ENCODE measurements at regions of chr2 and their contacts with region 1.

Region 1: DNA sequence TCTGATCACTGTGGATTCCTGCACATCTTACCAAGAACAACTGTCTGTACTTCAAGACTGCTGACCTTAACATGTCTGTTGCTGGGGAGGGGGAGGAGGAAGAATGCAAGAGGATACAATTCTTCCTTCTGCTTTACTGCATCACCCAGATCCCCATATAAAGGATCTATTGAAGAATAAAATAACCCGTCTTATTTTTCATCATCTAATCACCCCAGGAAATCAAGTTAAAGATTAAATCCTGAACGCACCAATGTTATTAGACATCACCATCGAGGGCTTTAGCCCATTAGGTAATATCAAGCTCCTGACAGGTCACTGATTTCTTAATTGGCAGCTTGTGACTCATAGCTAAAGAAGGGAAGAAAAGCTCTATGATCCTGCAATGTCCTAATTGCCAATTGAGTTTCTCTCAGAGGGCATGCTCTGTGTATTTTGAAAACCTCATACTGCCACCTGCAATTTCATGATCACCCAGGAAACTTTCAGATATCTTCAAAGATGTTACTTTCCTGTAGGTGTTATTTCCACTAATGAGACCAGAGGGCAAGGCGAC is 75.4 kb upstream of the KCNE4 start:
- DNase-seq: peak; percentile 32
- H3K4me3 Mint-ChIP-seq: no peak overlapping the region
- H3K27ac Mint-ChIP-seq: peak overlapping the region; percentile 73
- H3K4me1 Mint-ChIP-seq: peaks cover 49% of the 10 kb centered on the region
- H3K27me3 Mint-ChIP-seq: no peaks in the 10 kb centered on the region
- CTCF ChIP-seq: no peak

Region 2: DNA sequence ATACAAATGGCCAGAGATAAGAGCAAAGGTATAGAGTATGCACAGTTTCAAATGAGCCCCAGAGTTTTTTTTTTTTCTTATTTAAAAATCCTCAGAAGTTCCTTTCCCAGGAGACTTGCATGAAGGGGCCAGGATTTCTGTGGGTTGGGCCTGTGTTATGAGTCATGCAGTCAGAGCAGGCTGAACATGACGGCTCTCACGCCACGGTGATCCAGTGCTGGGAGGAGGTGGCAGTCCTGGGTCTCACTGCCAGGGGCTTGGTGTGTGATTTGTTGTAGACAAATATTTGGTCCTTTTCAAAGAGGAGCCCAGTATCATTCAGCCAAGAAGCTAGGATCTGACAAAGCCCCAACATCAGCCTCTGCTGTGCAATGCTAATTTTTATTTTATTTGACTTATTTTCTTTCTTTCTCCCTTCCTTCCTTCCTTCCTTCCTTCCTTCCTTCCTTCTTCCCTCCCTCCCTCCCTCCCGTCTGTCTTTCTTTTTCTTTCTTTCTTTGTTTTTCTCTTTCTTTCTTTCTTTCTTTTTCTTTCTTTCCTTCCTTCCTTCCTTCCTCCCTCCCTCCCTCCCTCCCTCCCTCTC is 65.0 kb after region 1 on chr2:
- CTCF ChIA-PET with region 1: no interaction called
- intact Hi-C with region 1: loop called (anchors 5 kb)
- DNase-seq: peak; percentile 82
- H3K4me3 Mint-ChIP-seq: peak overlapping the region; percentile 0
- H3K27ac Mint-ChIP-seq: peak overlapping the region; percentile 91
- H3K4me1 Mint-ChIP-seq: peaks cover 44% of the 10 kb centered on the region
- H3K27me3 Mint-ChIP-seq: no peaks in the 10 kb centered on the region
- CTCF ChIP-seq: no peak

Region 3: DNA sequence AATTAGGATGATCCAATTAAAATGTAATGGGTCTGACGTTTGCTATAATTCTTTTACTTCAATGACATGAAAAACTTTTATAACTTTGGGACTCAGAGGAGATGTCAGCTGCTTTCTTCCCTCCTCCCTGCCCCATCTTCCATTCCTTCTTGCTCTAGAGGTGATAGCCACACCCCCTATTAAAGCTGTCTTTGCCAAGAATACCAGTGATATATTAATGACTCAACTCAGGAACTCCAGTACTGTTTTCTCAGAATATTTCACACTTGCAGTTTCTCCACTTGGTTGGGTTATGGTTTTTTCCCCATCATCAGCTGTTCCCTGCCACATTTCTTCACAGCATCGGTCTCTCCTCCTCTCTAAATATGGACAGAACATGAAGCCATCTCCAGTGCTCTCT is 259.4 kb after region 1 on chr2:
- CTCF ChIA-PET with region 1: interaction called, 6 read pairs
- intact Hi-C with region 1: loop called (anchors 10 kb)
- DNase-seq: no peak
- H3K4me3 Mint-ChIP-seq: no peak overlapping the region
- H3K27ac Mint-ChIP-seq: no peak overlapping the region
- H3K4me1 Mint-ChIP-seq: no peaks in the 10 kb centered on the region
- H3K27me3 Mint-ChIP-seq: peaks cover 17% of the 10 kb centered on the region
- CTCF ChIP-seq: no peak

Region 4: GRCh38 chr2:223459328-223459939 is 482.8 kb after region 1 on chr2:
- CTCF ChIA-PET with region 1: no interaction called
- intact Hi-C with region 1: loop called (anchors 10 kb)
- DNase-seq: no peak
- H3K4me3 Mint-ChIP-seq: no peak overlapping the region
- H3K27ac Mint-ChIP-seq: no peak overlapping the region
- H3K4me1 Mint-ChIP-seq: peaks cover 9% of the 10 kb centered on the region
- H3K27me3 Mint-ChIP-seq: no peaks in the 10 kb centered on the region
- CTCF ChIP-seq: peak; percentile 25

Region 5: DNA sequence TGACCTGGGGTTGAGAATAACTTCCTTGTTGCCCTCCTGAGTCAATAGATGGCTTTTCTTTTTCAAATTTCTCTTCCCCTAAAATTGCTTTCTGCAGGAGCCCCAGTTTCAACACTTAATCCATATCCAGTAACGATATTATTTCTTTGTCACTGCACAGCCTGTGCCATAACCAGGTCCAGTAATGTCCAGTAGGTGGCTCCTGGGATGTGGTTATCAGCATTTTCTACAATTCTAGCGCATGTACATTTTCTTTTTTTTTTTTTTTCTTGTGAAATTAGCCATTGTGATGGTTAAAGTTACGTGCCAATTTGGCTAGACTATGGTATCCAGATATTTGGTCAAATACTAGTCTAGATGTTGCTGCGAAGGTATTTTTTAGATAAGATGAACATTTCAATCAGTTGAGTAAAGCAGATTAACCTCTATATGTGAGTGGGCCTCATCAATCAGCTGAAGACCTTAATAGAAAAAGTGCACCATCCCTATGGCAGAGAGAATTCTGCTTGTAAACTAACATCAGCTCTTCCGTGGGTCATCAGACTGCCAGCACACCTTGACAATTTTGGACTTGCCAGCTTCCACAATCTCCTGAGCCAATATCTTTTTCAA is 698.5 kb after region 1 on chr2:
- CTCF ChIA-PET with region 1: no interaction called
- intact Hi-C with region 1: loop called (anchors 5 kb)
- DNase-seq: peak; percentile 69
- H3K4me3 Mint-ChIP-seq: no peak overlapping the region
- H3K27ac Mint-ChIP-seq: peak overlapping the region; percentile 25
- H3K4me1 Mint-ChIP-seq: peaks cover 27% of the 10 kb centered on the region
- H3K27me3 Mint-ChIP-seq: no peaks in the 10 kb centered on the region
- CTCF ChIP-seq: peak; percentile 70

Region 6: GRCh38 chr2:223837287-223838061 is 860.9 kb after region 1 on chr2 and contains the start of gene AP1S3:
- CTCF ChIA-PET with region 1: no interaction called
- intact Hi-C with region 1: loop called (anchors 10 kb)
- DNase-seq: peak; percentile 91
- H3K4me3 Mint-ChIP-seq: peak within 1 kb of the TSS; percentile 88
- H3K27ac Mint-ChIP-seq: peak within 1 kb of the TSS; percentile 89
- H3K4me1 Mint-ChIP-seq: peaks cover 34% of the 10 kb centered on the region
- H3K27me3 Mint-ChIP-seq: no peaks in the 10 kb centered on the region
- CTCF ChIP-seq: no peak
- total RNA-seq, gene AP1S3: 108 and 119 TPM in 2 replicates